Activated CD8-positive, alpha-beta memory T cell treated with anti-CD3 and anti-CD28 coated beads, Interleukin-2, amount 10 ng/mL, durations not matched to agents 7 days and 5 days (primary cell): ENCODE measurements at regions of chr3 and their contacts with region 1.

Region 1: GRCh38 chr3:15120986-15121385 is 22.0 kb upstream of the RBSN start:
- DNase-seq: no peak
- ATAC-seq: no peak
- H3K4me3 Mint-ChIP-seq: no peak overlapping the region
- H3K27ac Mint-ChIP-seq: no peak overlapping the region
- H3K4me1 Mint-ChIP-seq: peaks cover 14% of the 10 kb centered on the region
- H3K27me3 Mint-ChIP-seq: no peaks in the 10 kb centered on the region

Region 2: GRCh38 chr3:15108082-15108545 is 12.9 kb before region 1 on chr3:
- CTCF ChIA-PET with region 1: interaction called, 49 read pairs
- DNase-seq: peak; percentile 81
- ATAC-seq: peak; percentile 95
- H3K4me3 Mint-ChIP-seq: no peak overlapping the region
- H3K27ac Mint-ChIP-seq: no peak overlapping the region
- H3K4me1 Mint-ChIP-seq: peaks cover 3% of the 10 kb centered on the region
- H3K27me3 Mint-ChIP-seq: peaks cover 16% of the 10 kb centered on the region

Region 3: GRCh38 chr3:15199493-15200105 is 78.6 kb after region 1 on chr3:
- CTCF ChIA-PET with region 1: interaction called, 19 read pairs
- DNase-seq: no peak
- ATAC-seq: no peak
- H3K4me3 Mint-ChIP-seq: no peak overlapping the region
- H3K27ac Mint-ChIP-seq: no peak overlapping the region
- H3K4me1 Mint-ChIP-seq: peaks cover 20% of the 10 kb centered on the region
- H3K27me3 Mint-ChIP-seq: peaks cover 12% of the 10 kb centered on the region